ENCODE measurements at regions of chr1 and their contacts with region 1.

Region 1: DNA sequence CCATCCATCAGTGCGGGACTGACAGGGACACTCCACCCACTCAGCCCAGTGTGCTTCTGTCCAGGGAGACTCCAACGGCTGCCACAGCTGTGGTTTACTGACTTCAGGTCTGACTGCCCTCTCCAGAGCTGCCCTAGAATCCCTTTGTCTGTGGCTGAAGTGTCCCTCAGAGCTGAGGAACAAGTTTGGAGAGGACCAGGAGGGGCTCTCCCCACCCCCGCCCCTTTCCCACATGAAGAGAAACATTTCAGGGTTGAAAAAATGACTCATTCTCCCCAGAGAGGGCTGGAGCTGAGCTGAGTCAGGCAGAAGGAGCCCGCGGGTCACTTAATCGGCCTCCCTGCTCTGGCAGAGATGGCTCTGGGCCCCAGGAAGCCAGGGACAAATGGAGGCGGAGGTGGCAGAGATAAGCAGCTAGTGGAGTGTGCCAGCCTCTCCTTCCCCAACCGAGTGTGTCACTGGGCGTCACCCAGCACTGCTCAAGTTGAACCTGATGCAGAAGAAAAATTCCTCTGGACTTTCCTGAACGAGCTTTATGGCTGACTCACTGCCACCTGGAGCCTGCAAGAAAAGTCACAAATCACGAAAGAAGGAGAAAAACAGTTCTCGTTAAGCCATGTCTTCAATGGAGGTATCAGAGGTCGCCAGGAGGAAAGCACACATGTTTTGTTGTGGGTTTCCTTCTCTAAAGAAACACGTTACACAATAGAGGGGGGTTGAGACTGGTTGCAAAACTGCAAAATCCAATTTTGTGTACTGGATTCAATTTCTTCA is 34.3 kb upstream of the ECE1 start:
- DNase-seq: peak; percentile 41
- ATAC-seq: peak; percentile 83
- H3K4me3 ChIP-seq: 0 out of 2 replicates have a peak overlapping the region, but pooled peaks have one; percentile 4
- H3K27ac ChIP-seq: peak overlapping the region; percentile 40
- H3K4me1 ChIP-seq: peaks cover 36% of the 10 kb centered on the region
- H3K27me3 ChIP-seq: no peaks in the 10 kb centered on the region
- CTCF ChIP-seq: no peak
- EP300 ChIP-seq: no peak
- POLR2A ChIP-seq: no peak
- RAD21 ChIP-seq: no peak

Region 2: GRCh38 chr1:20840731-20841130 is 483.8 kb before region 1 on chr1:
- CTCF ChIA-PET with region 1: no interaction called
- POLR2A ChIA-PET with region 1: no interaction called
- RAD21 ChIA-PET with region 1: no interaction called
- SMC1A ChIA-PET with region 1: no interaction called
- in situ Hi-C with region 1: no loop called
- intact Hi-C with region 1: no loop called
- DNase-seq: no peak
- ATAC-seq: no peak
- H3K4me3 ChIP-seq: no peak overlapping the region
- H3K27ac ChIP-seq: no peak overlapping the region
- H3K4me1 ChIP-seq: no peaks in the 10 kb centered on the region
- H3K27me3 ChIP-seq: no peaks in the 10 kb centered on the region
- CTCF ChIP-seq: no peak
- EP300 ChIP-seq: no peak
- POLR2A ChIP-seq: no peak
- RAD21 ChIP-seq: no peak

Region 3: GRCh38 chr1:21154717-21155116 is 169.8 kb before region 1 on chr1:
- CTCF ChIA-PET with region 1: no interaction called
- POLR2A ChIA-PET with region 1: no interaction called
- RAD21 ChIA-PET with region 1: no interaction called
- SMC1A ChIA-PET with region 1: no interaction called
- in situ Hi-C with region 1: no loop called
- intact Hi-C with region 1: no loop called
- DNase-seq: no peak
- ATAC-seq: no peak
- H3K4me3 ChIP-seq: no peak overlapping the region
- H3K27ac ChIP-seq: no peak overlapping the region
- H3K4me1 ChIP-seq: 0 out of 2 replicates have a peak, but pooled peaks cover 3% of the 10 kb centered on the region
- H3K27me3 ChIP-seq: no peaks in the 10 kb centered on the region
- CTCF ChIP-seq: no peak
- EP300 ChIP-seq: no peak
- POLR2A ChIP-seq: no peak
- RAD21 ChIP-seq: no peak

Region 4: DNA sequence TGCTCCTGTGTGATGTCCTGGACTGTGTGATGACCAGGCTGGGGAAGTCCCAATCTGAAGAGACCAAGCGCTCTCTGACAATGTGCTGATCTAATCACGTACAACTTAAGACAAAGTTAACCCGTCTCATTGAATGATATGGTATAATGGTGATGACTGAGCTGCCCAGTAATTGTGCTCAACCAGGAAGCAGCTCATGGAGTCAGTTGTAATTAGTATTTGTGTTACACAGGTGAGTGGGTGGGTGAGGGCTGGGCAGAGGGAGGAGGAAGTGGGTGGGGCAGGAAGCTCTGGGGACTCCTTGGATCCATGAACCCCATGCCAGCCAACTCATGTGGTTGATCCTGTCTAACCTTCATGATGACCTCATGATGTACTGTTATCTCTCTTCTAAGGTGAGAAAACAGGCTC is 25.6 kb before region 1 on chr1:
- CTCF ChIA-PET with region 1: interaction called, 59 read pairs
- POLR2A ChIA-PET with region 1: interaction called, 71 read pairs
- RAD21 ChIA-PET with region 1: interaction called, 97 read pairs
- SMC1A ChIA-PET with region 1: interaction called, 123 read pairs
- in situ Hi-C with region 1: no loop called
- intact Hi-C with region 1: loop called (anchors 1 kb)
- DNase-seq: no peak
- ATAC-seq: no peak
- H3K4me3 ChIP-seq: no peak overlapping the region
- H3K27ac ChIP-seq: no peak overlapping the region
- H3K4me1 ChIP-seq: peaks cover 23% of the 10 kb centered on the region
- H3K27me3 ChIP-seq: no peaks in the 10 kb centered on the region
- CTCF ChIP-seq: no peak
- EP300 ChIP-seq: no peak
- POLR2A ChIP-seq: no peak
- RAD21 ChIP-seq: no peak

Region 5: DNA sequence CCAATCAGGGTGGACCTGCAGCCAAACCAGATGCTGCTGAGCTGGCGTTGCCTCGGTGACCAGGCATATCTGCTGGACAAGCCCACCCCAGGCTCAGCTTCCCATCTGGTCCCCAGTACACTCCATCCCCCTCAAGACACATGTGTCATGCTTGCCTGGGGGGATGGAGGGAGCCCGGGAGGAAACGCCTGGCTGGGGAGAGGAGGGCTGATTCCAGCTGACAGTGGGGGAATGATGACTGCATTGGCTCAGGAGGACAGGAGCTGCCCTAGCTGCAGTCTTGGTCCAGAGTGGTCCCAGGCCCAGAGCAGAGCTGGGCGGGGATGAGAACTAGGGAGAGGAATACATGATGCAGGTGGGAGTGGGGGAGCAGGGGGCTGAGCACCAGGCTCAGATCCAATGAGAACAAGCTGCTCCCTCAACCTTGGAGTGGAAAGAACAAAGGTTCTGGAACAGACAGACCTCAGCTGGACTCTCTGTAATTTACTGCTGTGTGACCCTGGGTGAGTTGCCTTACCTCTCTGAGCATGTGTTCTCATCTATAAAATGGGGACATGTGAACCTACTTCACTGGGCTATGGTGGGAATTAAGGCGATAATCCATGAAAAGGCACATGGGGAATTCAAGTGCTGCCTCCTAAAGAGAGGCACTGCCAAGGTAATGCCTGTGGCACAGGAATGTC is 11.2 kb before region 1 on chr1:
- CTCF ChIA-PET with region 1: interaction called, 4 read pairs
- POLR2A ChIA-PET with region 1: interaction called, 3 read pairs
- RAD21 ChIA-PET with region 1: no interaction called
- SMC1A ChIA-PET with region 1: interaction called, 12 read pairs
- in situ Hi-C with region 1: no loop called
- intact Hi-C with region 1: no loop called
- DNase-seq: no peak
- ATAC-seq: no peak
- H3K4me3 ChIP-seq: no peak overlapping the region
- H3K27ac ChIP-seq: no peak overlapping the region
- H3K4me1 ChIP-seq: no peaks in the 10 kb centered on the region; the same call in 1 of the 2 replicates
- H3K27me3 ChIP-seq: no peaks in the 10 kb centered on the region
- CTCF ChIP-seq: no peak
- EP300 ChIP-seq: no peak
- POLR2A ChIP-seq: no peak
- RAD21 ChIP-seq: no peak

Region 6: DNA sequence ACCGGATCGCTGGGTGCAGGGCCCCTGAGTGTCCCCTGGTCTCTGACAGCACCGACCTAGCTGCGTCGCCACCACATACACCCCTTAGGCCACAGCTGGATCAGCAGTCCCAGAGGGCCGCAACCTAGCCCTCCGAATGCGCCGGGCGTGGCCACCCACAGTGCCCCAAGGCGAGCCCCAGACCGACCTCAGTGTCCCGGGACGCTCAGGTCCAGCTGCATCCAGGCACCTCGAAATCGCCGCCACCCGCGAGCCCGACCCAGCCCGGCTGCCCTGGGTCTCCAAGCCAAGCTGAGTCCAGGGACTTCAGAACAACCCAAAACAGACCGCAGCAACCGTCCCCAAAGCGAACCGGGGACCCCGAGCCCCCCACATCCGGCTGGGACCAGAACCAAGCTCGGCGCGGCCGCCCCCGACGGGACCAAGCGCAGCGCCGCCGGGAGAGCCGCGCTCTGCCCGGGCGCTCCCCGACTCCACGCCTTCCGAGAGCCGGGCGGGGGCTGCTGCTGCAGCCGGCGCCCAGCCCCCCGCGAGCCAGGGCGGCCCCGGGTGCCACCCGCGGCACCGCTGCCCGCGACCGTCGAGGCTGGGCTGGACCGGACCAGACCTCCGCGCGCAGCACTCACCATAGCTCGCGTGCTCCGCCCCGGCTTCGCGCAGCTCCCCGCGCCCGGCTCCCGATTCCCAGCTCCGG is 20.3 kb after region 1 on chr1:
- CTCF ChIA-PET with region 1: interaction called, 7 read pairs
- POLR2A ChIA-PET with region 1: interaction called, 20 read pairs
- RAD21 ChIA-PET with region 1: interaction called, 12 read pairs
- SMC1A ChIA-PET with region 1: interaction called, 79 read pairs
- in situ Hi-C with region 1: no loop called
- intact Hi-C with region 1: no loop called
- DNase-seq: no peak
- ATAC-seq: peak; percentile 19
- H3K4me3 ChIP-seq: peak overlapping the region; percentile 98
- H3K27ac ChIP-seq: peak overlapping the region; percentile 43; the same call in 1 of the 2 replicates
- H3K4me1 ChIP-seq: peaks cover 34% of the 10 kb centered on the region
- H3K27me3 ChIP-seq: peaks cover 0 to 2% of the 10 kb centered on the region in 2 experiments; a peak in 1 of 4 replicates
- CTCF ChIP-seq: no peak
- EP300 ChIP-seq: no peak
- POLR2A ChIP-seq: no peak
- RAD21 ChIP-seq: no peak